ENCODE measurements at regions of chr6 and their contacts with region 1.

Region 1: DNA sequence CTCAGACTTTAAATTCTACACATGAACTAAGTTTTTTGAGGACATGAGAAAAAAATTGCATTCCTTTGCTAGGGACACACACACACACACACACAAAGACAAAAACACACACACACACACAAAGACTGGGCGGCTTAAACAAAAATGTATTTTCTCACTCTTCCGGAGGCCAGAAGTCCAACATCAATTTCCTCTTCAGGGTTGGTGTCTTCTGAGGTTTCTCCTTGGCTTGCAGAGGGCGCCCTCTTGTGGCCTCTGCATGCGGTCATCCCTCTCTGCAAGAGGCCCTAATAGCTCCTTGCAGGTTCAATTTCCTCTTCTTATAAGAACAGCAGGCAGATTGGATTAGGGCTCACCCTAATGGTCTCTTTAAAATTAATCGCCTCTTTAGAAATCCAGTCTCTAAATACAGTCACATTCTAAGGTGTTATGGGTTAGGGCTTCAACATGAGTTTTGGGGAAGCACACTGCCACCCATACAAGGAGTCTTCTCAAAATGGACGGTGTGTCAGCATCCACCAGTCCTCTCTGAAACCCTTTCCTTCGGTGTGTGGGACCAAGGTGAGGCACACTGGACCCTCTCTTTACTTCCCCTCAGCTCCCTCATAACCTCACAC is 61.4 kb downstream of the GPR6 start:
- DNase-seq: peak; percentile 74 to 83
- H3K4me3 ChIP-seq: peak overlapping the region; percentile 9; the same call in 1 of the 2 replicates
- H3K27ac ChIP-seq: no peak overlapping the region
- H3K4me1 ChIP-seq: peaks cover 12% of the 10 kb centered on the region
- H3K27me3 ChIP-seq: no peaks in the 10 kb centered on the region
- CTCF ChIP-seq: peak; percentile 96

Region 2: DNA sequence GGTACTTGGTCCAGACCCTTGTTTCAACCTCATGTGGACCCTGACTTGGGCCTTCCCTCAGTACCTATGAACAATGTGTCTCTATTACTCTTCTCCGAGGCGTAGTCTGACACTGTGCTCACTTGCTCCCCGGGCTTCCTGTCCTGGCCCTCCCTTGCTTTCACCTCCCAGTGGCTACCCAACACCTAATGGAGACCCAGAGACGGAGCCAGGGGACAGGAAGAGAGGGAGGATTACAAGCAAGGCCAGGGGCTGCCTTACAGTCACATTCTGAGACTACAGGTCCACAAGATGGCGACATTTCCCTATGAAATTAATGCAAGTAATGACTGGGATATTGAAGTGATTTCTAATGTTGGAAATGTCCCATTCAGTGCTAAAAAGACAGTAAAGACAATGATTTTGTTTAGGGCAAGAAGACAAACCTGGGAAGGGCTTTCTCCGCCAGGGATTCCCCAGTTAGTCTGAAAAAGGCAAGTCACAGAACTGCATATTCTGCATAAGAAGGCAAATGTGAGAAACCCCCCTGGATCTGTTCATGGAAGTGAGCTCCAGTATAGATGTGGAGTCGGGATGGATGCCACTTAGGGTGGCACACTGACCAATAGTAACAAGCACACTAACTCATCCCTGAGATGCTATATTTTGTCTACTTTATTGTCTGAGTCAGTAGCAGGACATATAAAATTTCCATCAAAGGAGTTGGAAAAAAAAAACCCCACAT is 512.4 kb before region 1 on chr6:
- CTCF ChIA-PET with region 1: interaction called, 3 read pairs
- POLR2A ChIA-PET with region 1: no interaction called
- intact Hi-C with region 1: loop called (anchors 2 kb)
- DNase-seq: peak; percentile 33 to 55
- H3K4me3 ChIP-seq: no peak overlapping the region
- H3K27ac ChIP-seq: no peak overlapping the region
- H3K4me1 ChIP-seq: no peaks in the 10 kb centered on the region
- H3K27me3 ChIP-seq: no peaks in the 10 kb centered on the region
- CTCF ChIP-seq: peak; percentile 80

Region 3: GRCh38 chr6:109595998-109596397 is 443.5 kb before region 1 on chr6:
- CTCF ChIA-PET with region 1: interaction called, 3 read pairs
- POLR2A ChIA-PET with region 1: no interaction called
- intact Hi-C with region 1: loop called (anchors 1 kb)
- DNase-seq: peak in 1 of 2 experiments; percentile 3
- H3K4me3 ChIP-seq: no peak overlapping the region
- H3K27ac ChIP-seq: no peak overlapping the region
- H3K4me1 ChIP-seq: no peaks in the 10 kb centered on the region
- H3K27me3 ChIP-seq: 0 out of 2 replicates have a peak, but pooled peaks cover 7% of the 10 kb centered on the region
- CTCF ChIP-seq: peak; percentile 79

Region 4: GRCh38 chr6:109705258-109705657 is 334.2 kb before region 1 on chr6:
- CTCF ChIA-PET with region 1: interaction called, 15 read pairs
- POLR2A ChIA-PET with region 1: no interaction called
- intact Hi-C with region 1: loop called (anchors 1 kb)
- DNase-seq: peak; percentile 76 to 77
- H3K4me3 ChIP-seq: no peak overlapping the region
- H3K27ac ChIP-seq: no peak overlapping the region
- H3K4me1 ChIP-seq: peaks cover 6% of the 10 kb centered on the region; the same call in 1 of the 2 replicates
- H3K27me3 ChIP-seq: no peaks in the 10 kb centered on the region
- CTCF ChIP-seq: peak; percentile 98

Region 5: DNA sequence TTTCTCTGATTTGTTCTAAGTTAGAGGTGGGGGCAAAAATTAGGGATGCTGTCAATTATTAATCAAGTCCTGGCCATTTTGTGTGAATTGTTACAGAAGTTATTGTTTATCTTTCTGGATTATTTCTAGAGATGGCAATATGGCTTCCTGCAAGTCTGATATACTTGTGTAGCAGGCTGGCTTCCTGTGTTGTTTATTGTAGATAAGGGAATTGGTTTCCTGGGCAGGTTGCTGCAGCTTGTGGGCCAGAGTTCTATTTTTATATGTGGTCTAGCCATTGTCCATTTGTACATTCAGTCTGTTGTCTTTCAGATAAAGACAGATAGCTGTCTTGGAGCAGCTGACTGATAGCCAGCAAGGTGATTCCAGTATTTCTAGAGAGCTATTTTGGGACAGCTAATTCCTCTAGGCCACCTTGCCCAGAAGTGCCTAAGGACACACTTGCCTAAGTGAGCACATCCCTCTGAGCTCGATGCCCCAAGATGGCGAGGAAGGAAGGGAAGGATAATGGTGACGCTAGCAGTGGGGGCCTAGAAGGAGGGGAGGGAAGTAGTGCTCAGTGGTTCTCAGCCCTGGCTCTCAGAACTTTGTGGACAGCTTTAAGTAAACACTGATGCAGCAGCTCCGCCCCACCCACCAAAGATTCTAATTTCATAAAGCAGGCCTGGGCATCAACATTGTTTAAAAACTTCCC is 350.4 kb after region 1 on chr6:
- CTCF ChIA-PET with region 1: interaction called, 9 read pairs
- POLR2A ChIA-PET with region 1: no interaction called
- intact Hi-C with region 1: loop called (anchors 2 kb)
- DNase-seq: no peak
- H3K4me3 ChIP-seq: no peak overlapping the region
- H3K27ac ChIP-seq: no peak overlapping the region
- H3K4me1 ChIP-seq: no peaks in the 10 kb centered on the region
- H3K27me3 ChIP-seq: no peaks in the 10 kb centered on the region
- CTCF ChIP-seq: no peak

Region 6: DNA sequence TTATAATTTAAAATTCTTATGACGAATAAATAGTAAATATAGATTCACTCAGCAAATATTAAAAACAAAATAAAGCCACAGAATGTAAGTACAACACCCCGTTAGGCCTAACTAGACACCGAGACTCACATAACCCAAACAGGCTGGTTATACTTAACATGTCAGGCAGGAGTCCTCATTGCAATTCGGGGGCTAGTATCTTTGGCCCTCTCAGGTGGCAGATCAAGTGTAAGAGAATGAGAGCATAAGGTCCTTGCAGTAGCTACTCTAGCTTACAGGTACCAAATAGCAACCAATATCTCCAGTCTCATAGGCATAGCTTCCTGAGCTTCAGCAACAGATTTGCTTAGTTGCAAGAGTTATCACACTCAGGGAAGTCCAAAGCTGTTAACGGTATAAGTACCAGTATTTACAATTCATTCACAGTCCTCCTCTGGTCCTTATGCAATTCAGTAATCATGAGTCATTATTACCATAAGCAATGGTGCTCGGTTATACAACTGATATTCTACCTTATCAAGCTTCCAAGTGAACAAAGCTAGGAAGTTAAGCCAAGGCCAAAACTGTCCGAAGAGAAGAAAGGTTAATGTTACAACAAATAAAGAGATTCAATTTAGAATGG is 1423.4 kb after region 1 on chr6:
- CTCF ChIA-PET with region 1: interaction called, 13 read pairs
- POLR2A ChIA-PET with region 1: no interaction called
- intact Hi-C with region 1: no loop called
- DNase-seq: no peak
- H3K4me3 ChIP-seq: no peak overlapping the region
- H3K27ac ChIP-seq: no peak overlapping the region
- H3K4me1 ChIP-seq: peaks cover 3% of the 10 kb centered on the region; the same call in 1 of the 2 replicates
- H3K27me3 ChIP-seq: no peaks in the 10 kb centered on the region
- CTCF ChIP-seq: no peak

Measured in PC-9 (cell line).